Activated B cell treated with CpG ODN at 0.5 μM for 24 hours (primary cell): ENCODE measurements at regions of chr2 and their contacts with region 1.

Region 1: GRCh38 chr2:206556357-206556949 is 85.8 kb upstream of the FAM237A start:
- DNase-seq: no peak
- ATAC-seq: no peak
- H3K4me3 Mint-ChIP-seq: no peak overlapping the region
- H3K27ac Mint-ChIP-seq: no peak overlapping the region
- H3K4me1 Mint-ChIP-seq: no peaks in the 10 kb centered on the region
- H3K27me3 Mint-ChIP-seq: no peaks in the 10 kb centered on the region
- CTCF ChIP-seq: no peak

Region 2: GRCh38 chr2:206392118-206392517 is 164.3 kb before region 1 on chr2:
- CTCF ChIA-PET with region 1: interaction called, 6 read pairs
- POLR2A ChIA-PET with region 1: no interaction called
- intact Hi-C with region 1: loop called (anchors 1 kb)
- DNase-seq: no peak
- ATAC-seq: peak; percentile 49
- H3K4me3 Mint-ChIP-seq: no peak overlapping the region
- H3K27ac Mint-ChIP-seq: no peak overlapping the region
- H3K4me1 Mint-ChIP-seq: no peaks in the 10 kb centered on the region
- H3K27me3 Mint-ChIP-seq: no peaks in the 10 kb centered on the region
- CTCF ChIP-seq: no peak